ENCODE measurements at regions of chr2 and their contacts with region 1.

Region 1: GRCh38 chr2:74147727-74148456 is at the start of gene BOLA3:
- DNase-seq: peak; percentile 93 to 97
- H3K4me3 ChIP-seq: peak within 1 kb of the TSS; percentile 68
- H3K4me3 Mint-ChIP-seq: no peak within 1 kb of the TSS
- H3K27ac Mint-ChIP-seq: no peak within 1 kb of the TSS
- H3K4me1 ChIP-seq: peaks cover 7% of the 10 kb centered on the region; the same call in 1 of the 2 replicates
- H3K4me1 Mint-ChIP-seq: peaks cover 6% of the 10 kb centered on the region
- H3K27me3 ChIP-seq: no peaks in the 10 kb centered on the region
- H3K27me3 Mint-ChIP-seq: no peaks in the 10 kb centered on the region
- CTCF ChIP-seq: peak; percentile 58 to 75
- total RNA-seq, gene BOLA3: 71.5 and 79.7 TPM in 2 replicates

Region 2: DNA sequence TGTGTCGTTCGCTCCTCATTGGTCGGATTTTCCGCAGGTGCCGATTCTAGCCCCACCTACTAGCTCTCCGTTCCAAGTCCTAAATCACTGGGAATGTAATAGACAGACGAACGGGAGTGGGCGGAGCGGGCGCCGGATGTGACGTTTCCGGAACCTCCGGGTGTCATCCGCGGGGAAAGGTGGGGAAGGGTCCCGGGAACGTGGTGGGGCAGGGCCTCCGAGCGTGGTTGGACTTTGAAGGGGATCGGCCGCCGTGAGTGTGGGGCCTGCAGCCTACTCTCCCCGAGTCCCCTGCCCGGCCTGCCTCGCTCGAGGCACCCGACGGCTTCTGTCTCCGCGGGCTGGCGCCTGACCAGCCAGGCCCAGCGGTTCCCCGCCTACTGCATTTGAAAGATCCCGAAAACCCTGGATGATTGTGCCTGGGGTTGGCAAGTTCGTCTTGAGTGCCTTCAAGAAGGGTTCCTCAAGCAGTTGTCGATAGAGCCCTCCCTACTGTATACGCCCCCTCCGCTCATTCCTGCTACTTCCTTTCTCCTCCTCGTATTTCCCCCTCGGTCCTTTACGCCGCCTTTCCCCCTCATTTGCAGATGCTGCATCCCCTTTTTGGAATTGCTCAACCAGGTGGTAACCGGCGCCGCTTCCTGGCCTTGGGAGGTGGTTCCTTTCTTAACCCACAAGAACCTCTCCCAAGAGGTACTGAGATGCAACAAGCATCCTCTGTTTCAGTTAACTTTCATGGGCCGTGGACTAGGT is 318.9 kb before region 1 on chr2 and contains the start of gene STAMBP:
- CTCF ChIA-PET with region 1: interaction called, 17 read pairs
- POLR2A ChIA-PET with region 1: interaction called, 6 read pairs
- intact Hi-C with region 1: loop called (anchors 1 kb)
- DNase-seq: peak; percentile 96
- H3K4me3 ChIP-seq: peak within 1 kb of the TSS; percentile 75
- H3K4me3 Mint-ChIP-seq: peak within 1 kb of the TSS; percentile 84
- H3K27ac Mint-ChIP-seq: peak within 1 kb of the TSS; percentile 93
- H3K4me1 ChIP-seq: peaks cover 3% of the 10 kb centered on the region; the same call in 1 of the 2 replicates
- H3K4me1 Mint-ChIP-seq: peaks cover 9% of the 10 kb centered on the region
- H3K27me3 ChIP-seq: no peaks in the 10 kb centered on the region
- H3K27me3 Mint-ChIP-seq: no peaks in the 10 kb centered on the region
- CTCF ChIP-seq: no peak
- total RNA-seq, gene STAMBP: 49.8 and 50.1 TPM in 2 replicates

Region 3: GRCh38 chr2:73839652-73840411 is 308.1 kb before region 1 on chr2:
- CTCF ChIA-PET with region 1: no interaction called
- POLR2A ChIA-PET with region 1: no interaction called
- intact Hi-C with region 1: no loop called
- DNase-seq: no peak
- H3K4me3 ChIP-seq: no peak overlapping the region
- H3K4me3 Mint-ChIP-seq: no peak overlapping the region
- H3K27ac Mint-ChIP-seq: no peak overlapping the region
- H3K4me1 ChIP-seq: peaks cover 12% of the 10 kb centered on the region
- H3K4me1 Mint-ChIP-seq: no peaks in the 10 kb centered on the region
- H3K27me3 ChIP-seq: no peaks in the 10 kb centered on the region
- H3K27me3 Mint-ChIP-seq: no peaks in the 10 kb centered on the region
- CTCF ChIP-seq: no peak

Region 4: GRCh38 chr2:73939419-73939818 is 208.5 kb before region 1 on chr2:
- CTCF ChIA-PET with region 1: no interaction called
- POLR2A ChIA-PET with region 1: no interaction called
- intact Hi-C with region 1: loop called (anchors 10 kb)
- DNase-seq: no peak
- H3K4me3 ChIP-seq: no peak overlapping the region
- H3K4me3 Mint-ChIP-seq: no peak overlapping the region
- H3K27ac Mint-ChIP-seq: no peak overlapping the region
- H3K4me1 ChIP-seq: no peaks in the 10 kb centered on the region; the same call in 1 of the 2 replicates
- H3K4me1 Mint-ChIP-seq: no peaks in the 10 kb centered on the region
- H3K27me3 ChIP-seq: no peaks in the 10 kb centered on the region
- H3K27me3 Mint-ChIP-seq: no peaks in the 10 kb centered on the region
- CTCF ChIP-seq: no peak

Region 5: DNA sequence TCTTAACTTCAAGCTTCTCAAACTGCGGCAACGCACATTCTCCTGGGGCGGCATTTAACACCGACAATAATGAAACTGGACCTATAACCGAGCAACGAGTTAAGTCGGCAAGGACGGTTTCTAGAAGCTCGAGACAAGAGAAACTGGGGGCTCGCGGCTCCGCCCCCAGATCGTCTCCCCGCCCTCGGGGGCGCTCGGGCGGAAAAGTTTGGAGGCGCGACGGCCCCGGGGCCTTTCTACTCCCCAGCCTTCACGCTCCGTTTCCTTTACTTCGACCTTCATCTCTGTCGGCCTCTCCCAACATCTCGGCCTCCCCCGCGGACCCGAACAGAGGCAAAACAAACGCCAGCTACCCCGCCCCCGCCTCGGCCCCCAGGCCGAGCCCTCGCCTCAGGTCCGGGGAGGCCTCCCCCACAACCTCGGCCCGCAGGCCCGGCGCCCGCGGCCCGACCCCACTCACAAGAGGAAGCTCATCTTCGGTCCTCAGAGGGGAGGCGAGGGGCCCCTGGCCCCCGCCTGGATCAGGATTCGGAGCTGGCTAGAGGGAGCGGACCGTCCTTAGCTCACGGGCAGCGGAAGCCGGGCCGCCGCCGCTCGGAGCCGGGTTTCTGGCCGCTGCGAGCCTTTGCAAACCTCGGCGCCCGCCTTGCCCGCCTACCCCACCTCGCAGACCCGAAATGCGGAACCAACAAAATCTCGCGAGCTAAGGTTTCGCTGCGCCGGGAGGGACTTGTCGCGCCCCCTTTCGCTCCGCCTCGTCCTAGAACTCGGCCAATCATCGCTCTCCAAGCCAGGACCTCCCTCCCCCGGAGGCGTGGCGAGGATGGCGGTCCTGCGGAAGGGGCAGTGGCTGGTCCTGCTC is 30.5 kb after region 1 on chr2 and contains the start of gene MOB1A:
- CTCF ChIA-PET with region 1: interaction called, 12 read pairs
- POLR2A ChIA-PET with region 1: interaction called, 8 read pairs
- intact Hi-C with region 1: loop called (anchors 2 kb)
- DNase-seq: peak; percentile 99 to 100
- H3K4me3 ChIP-seq: peak within 1 kb of the TSS; percentile 60
- H3K4me3 Mint-ChIP-seq: peak within 1 kb of the TSS; percentile 78
- H3K27ac Mint-ChIP-seq: peak within 1 kb of the TSS; percentile 46
- H3K4me1 ChIP-seq: 0 out of 2 replicates have a peak, but pooled peaks cover 4% of the 10 kb centered on the region
- H3K4me1 Mint-ChIP-seq: no peaks in the 10 kb centered on the region
- H3K27me3 ChIP-seq: no peaks in the 10 kb centered on the region
- H3K27me3 Mint-ChIP-seq: no peaks in the 10 kb centered on the region
- CTCF ChIP-seq: no peak
- total RNA-seq, gene MOB1A: 113 and 125 TPM in 2 replicates

Region 6: DNA sequence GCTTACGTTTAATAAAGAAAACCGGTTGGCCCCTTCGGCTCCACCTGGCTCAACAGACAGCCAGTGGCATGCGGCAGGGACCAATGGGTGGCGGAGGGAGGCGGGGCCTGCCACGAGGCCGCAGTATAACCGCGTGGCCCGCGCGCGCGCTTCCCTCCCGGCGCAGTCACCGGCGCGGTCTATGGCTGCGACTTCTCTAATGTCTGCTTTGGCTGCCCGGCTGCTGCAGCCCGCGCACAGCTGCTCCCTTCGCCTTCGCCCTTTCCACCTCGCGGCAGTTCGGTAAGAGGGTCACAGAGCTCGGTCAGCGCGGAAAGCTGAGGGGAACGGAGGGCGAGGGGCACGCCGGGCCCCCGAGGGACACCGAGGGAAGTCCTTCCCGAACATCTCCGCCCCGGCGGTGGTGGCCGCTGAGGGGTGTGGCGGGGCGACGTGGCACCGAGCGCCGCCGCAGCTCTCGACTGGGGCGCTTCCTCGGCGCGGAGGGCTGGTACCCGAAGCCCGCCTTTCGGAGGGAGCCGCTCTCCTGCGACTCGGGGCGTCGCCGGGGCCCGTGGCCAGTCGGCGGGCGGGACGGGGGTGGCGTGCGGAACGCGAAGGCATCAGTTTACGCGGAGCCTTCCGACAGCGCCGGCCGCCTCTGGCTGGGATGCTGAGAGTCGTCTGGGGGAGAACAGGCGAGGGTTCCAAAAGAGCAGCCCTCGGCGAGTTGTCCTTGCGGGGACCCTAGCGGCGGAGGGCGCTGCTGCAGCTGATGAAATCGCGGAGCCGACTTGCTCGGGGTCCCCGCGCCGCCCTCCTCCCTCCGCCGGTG is 50.8 kb after region 1 on chr2 and contains the start of gene MTHFD2:
- CTCF ChIA-PET with region 1: no interaction called
- POLR2A ChIA-PET with region 1: interaction called, 3 read pairs
- intact Hi-C with region 1: loop called (anchors 2 kb)
- DNase-seq: peak; percentile 98
- H3K4me3 ChIP-seq: peak within 1 kb of the TSS; percentile 80
- H3K4me3 Mint-ChIP-seq: peak within 1 kb of the TSS; percentile 91
- H3K27ac Mint-ChIP-seq: peak within 1 kb of the TSS; percentile 100
- H3K4me1 ChIP-seq: peaks cover 12% of the 10 kb centered on the region
- H3K4me1 Mint-ChIP-seq: peaks cover 26% of the 10 kb centered on the region
- H3K27me3 ChIP-seq: no peaks in the 10 kb centered on the region
- H3K27me3 Mint-ChIP-seq: no peaks in the 10 kb centered on the region
- CTCF ChIP-seq: peak; percentile 90
- total RNA-seq, gene MTHFD2: 416 and 470 TPM in 2 replicates

Region 7: GRCh38 chr2:74232426-74232825 is 84.5 kb after region 1 on chr2:
- CTCF ChIA-PET with region 1: no interaction called
- POLR2A ChIA-PET with region 1: no interaction called
- intact Hi-C with region 1: no loop called
- DNase-seq: no peak
- H3K4me3 ChIP-seq: no peak overlapping the region
- H3K4me3 Mint-ChIP-seq: no peak overlapping the region
- H3K27ac Mint-ChIP-seq: no peak overlapping the region
- H3K4me1 ChIP-seq: no peaks in the 10 kb centered on the region
- H3K4me1 Mint-ChIP-seq: peaks cover 7% of the 10 kb centered on the region
- H3K27me3 ChIP-seq: no peaks in the 10 kb centered on the region
- H3K27me3 Mint-ChIP-seq: no peaks in the 10 kb centered on the region
- CTCF ChIP-seq: no peak

Measured in Caco-2 (cell line).